ENCODE measurements at regions of chr2 and their contacts with region 1.

Region 1: GRCh38 chr2:202104278-202104870 is 31.3 kb downstream of the KIAA2012 start:
- DNase-seq: no peak
- H3K4me3 ChIP-seq: no peak overlapping the region
- CTCF ChIP-seq: peak; percentile 85

Region 2: DNA sequence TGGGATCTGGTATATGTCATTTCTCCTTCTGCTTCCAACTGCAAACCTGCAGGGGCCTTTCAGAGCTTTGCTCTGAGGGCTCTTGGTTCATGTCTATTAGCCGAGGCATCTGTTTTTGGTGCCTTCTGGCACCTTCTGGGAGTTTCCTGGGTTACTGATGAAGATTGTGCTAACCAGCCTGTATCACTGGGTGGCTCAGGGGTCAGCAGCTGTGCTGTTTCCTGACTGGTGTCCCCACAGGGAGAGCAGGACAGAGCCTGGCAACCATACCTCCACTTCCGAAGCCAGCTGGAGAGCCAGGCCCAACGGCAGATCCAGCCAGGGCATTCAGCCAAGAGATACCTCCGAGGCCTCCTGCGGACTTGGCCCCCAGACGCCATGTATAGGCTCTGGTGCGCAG is 13.8 kb before region 1 on chr2:
- CTCF ChIA-PET with region 1: interaction called, 16 read pairs
- POLR2A ChIA-PET with region 1: no interaction called
- DNase-seq: no peak
- H3K4me3 ChIP-seq: no peak overlapping the region
- CTCF ChIP-seq: no peak

Region 3: DNA sequence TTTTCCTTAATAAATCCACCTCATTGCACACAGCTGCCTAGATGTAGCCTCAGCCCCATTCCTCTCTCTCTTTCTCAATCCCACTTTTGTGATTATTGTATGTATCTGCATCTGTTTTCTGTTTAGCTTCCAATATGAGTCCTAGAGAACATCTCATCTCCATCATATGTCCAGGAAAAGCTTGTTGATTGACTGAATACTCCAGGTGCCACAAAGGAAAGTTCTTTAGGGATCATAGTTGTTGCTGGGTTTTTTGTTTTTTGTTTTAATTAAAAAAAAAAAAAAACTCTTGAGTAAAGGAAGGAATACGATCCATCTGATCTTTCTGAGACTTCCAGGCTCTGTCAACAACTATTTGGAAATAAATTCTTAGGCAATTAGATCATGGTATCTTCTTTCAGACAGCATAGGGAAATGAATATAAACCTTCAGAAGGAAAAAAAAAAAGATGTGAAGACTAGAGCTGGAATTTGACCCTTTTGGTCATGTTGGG is 11.2 kb after region 1 on chr2:
- CTCF ChIA-PET with region 1: interaction called, 39 read pairs
- POLR2A ChIA-PET with region 1: no interaction called
- DNase-seq: no peak
- H3K4me3 ChIP-seq: no peak overlapping the region
- CTCF ChIP-seq: no peak

Measured in AG04449 (cell line).